ENCODE measurements at regions of chr16 and their contacts with region 1.

Region 1: DNA sequence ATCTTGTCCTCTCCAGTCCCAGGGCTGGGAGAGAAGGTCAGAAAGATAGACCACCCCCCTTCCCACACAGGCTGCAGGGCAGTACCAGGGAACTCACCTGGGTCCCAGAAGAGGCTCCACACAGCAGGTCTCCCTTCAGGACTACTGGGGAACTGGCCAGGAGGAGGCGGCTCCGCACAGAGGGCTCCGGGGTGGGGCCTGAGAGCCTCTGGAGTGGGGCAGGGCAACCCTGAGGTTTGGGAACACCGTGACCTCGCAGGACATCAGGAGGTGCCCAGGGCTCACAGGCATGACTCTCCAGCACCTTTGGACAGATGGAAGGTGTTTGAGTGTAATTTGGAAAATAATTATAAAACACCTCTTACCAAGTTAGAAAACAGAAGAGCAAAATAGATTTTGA is 11.0 kb downstream of the ABCA3 start:
- DNase-seq: no peak
- ATAC-seq: no peak
- H3K4me3 ChIP-seq: no peak overlapping the region
- H3K27ac ChIP-seq: no peak overlapping the region
- H3K4me1 ChIP-seq: no peaks in the 10 kb centered on the region
- H3K27me3 ChIP-seq: no peaks in the 10 kb centered on the region
- CTCF ChIP-seq: no peak
- POLR2A ChIP-seq: no peak

Region 2: GRCh38 chr16:2278272-2278608 is 51.3 kb before region 1 on chr16:
- intact Hi-C with region 1: loop called in 1 of 10 experiments (anchors 10 kb)
- DNase-seq: no peak
- ATAC-seq: no peak
- H3K4me3 ChIP-seq: no peak overlapping the region
- H3K27ac ChIP-seq: no peak overlapping the region
- H3K4me1 ChIP-seq: peaks cover 0 to 3% (median 0%) of the 10 kb centered on the region in 12 donors
- H3K27me3 ChIP-seq: no peaks in the 10 kb centered on the region
- CTCF ChIP-seq: no peak
- POLR2A ChIP-seq: no peak

Region 3: DNA sequence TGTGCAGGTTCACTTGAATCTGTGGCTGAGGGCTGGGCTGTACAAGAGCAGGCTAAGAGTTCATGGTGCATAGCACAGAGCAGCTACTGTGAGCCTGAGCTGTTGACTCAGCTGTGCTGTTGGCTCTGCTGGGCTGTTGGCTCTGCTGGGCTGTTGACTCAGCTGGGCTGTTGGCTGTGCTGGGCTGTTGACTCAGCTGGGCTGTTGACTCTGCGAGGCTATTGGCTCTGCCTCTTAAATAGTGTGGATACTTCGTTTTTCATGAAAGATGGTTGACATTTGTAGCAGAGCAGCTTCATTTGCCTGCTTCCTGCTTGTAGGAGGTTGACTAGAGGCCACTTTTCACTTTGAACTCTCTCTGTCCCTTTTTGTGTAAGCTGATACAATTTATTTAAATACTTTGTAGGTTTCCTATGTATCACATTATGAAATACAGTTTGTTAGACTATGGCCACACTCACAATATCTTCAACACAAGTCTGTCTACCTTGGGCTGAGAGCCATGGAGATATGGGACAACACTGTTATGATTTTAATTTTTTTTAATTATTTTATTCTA is 59.4 kb after region 1 on chr16:
- intact Hi-C with region 1: no loop called
- DNase-seq: peak in 1 of 5 donors; percentile 32
- ATAC-seq: peak in 3 of 4 donors; percentile 68 to 85 (median 83)
- H3K4me3 ChIP-seq: no peak overlapping the region
- H3K27ac ChIP-seq: no peak overlapping the region
- H3K4me1 ChIP-seq: no peaks in the 10 kb centered on the region
- H3K27me3 ChIP-seq: no peaks in the 10 kb centered on the region
- CTCF ChIP-seq: no peak
- POLR2A ChIP-seq: no peak